Activated T-helper 1 cell treated with anti-CD3 and anti-CD28 coated beads, Interleukin-12 subunit alpha, Interleukin-12 subunit beta, Interleukin-2, Interleukin-4 antibody, amounts not matched to agents 30 ng/mL and 10 ng/mL and 1 ng/mL, durations not matched to agents 14 hours and 24 hours and 36 hours (primary cell): ENCODE measurements at regions of chr17 and their contacts with region 1.

Region 1: GRCh38 chr17:3723556-3724369 is at the start of gene HASPIN:
- DNase-seq: peak; percentile 93
- H3K4me3 Mint-ChIP-seq: peak within 1 kb of the TSS; percentile 98
- H3K27ac Mint-ChIP-seq: peak within 1 kb of the TSS; percentile 86
- H3K4me1 Mint-ChIP-seq: peaks cover 62% of the 10 kb centered on the region
- H3K27me3 Mint-ChIP-seq: no peaks in the 10 kb centered on the region
- total RNA-seq, gene HASPIN: 25.7 and 26.1 TPM in 2 replicates

Region 2: GRCh38 chr17:3668279-3669085 is 55.3 kb before region 1 on chr17 and contains the starts of genes EMC6 and TAX1BP3:
- intact Hi-C with region 1: loop called (anchors 1 kb)
- DNase-seq: peak; percentile 100
- H3K4me3 Mint-ChIP-seq: peak within 1 kb of the TSS; percentile 98
- H3K27ac Mint-ChIP-seq: peak within 1 kb of the TSS; percentile 97
- H3K4me1 Mint-ChIP-seq: peaks cover 21% of the 10 kb centered on the region
- H3K27me3 Mint-ChIP-seq: peaks cover 2% of the 10 kb centered on the region
- total RNA-seq, gene EMC6: 63.6 and 73.3 TPM in 2 replicates
- total RNA-seq, gene TAX1BP3: 29.3 and 30.1 TPM in 2 replicates

Region 3: GRCh38 chr17:3695723-3696411 is 27.9 kb before region 1 on chr17 and contains the start of gene P2RX5:
- intact Hi-C with region 1: loop called (anchors 1 kb)
- DNase-seq: peak; percentile 49
- H3K4me3 Mint-ChIP-seq: peak within 1 kb of the TSS; percentile 98
- H3K27ac Mint-ChIP-seq: peak within 1 kb of the TSS; percentile 93
- H3K4me1 Mint-ChIP-seq: peaks cover 40% of the 10 kb centered on the region
- H3K27me3 Mint-ChIP-seq: no peaks in the 10 kb centered on the region
- total RNA-seq, gene P2RX5: 133 and 143 TPM in 2 replicates

Region 4: DNA sequence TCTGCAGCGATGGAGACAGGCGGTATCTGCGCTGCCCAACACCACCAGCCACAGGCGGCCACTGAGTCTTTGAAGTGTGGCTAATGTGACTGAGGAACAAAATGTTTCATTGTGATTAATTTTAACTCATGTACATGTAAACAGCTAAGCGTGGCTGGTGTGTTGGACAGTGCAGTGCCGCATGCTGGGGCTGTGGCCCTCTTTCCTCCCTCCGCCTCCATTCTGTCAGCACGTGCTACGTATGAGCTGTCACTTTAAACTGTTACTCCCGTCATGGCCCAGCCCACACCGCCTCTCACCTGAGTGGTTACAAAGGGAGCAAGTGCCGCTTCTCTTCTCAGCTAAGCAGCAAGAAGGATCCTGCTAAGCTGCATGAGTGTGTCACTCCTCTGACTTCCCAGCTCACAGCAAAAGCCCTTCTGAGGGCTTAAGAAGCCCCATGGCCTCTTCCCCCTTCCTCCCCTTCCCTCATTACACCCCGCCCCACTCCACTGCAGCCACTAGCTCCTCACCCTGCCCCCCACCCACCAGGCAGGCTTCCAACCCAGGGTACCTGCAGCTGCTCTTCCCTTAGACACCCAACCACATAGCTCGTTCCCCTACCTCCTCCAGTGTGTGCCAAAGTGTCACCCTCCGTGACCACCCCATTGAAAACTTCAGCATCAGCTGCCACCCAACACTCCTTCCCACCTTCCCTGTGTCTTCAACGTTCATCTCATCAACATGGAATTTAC is 15.0 kb after region 1 on chr17:
- intact Hi-C with region 1: no loop called
- DNase-seq: peak; percentile 49
- H3K4me3 Mint-ChIP-seq: peak overlapping the region; percentile 21
- H3K27ac Mint-ChIP-seq: peak overlapping the region; percentile 67
- H3K4me1 Mint-ChIP-seq: peaks cover 50% of the 10 kb centered on the region
- H3K27me3 Mint-ChIP-seq: peaks cover 2% of the 10 kb centered on the region

Region 5: GRCh38 chr17:3845621-3846441 is 122.1 kb after region 1 on chr17 and contains the start of gene NCBP3:
- intact Hi-C with region 1: loop called (anchors 5 kb)
- DNase-seq: peak; percentile 90
- H3K4me3 Mint-ChIP-seq: peak within 1 kb of the TSS; percentile 97
- H3K27ac Mint-ChIP-seq: peak within 1 kb of the TSS; percentile 97
- H3K4me1 Mint-ChIP-seq: peaks cover 16% of the 10 kb centered on the region
- H3K27me3 Mint-ChIP-seq: peaks cover 9% of the 10 kb centered on the region
- total RNA-seq, gene NCBP3: 54.2 and 56.0 TPM in 2 replicates

Region 6: GRCh38 chr17:3870871-3871306 is 147.1 kb after region 1 on chr17:
- intact Hi-C with region 1: no loop called
- DNase-seq: no peak
- H3K4me3 Mint-ChIP-seq: peak overlapping the region; percentile 42
- H3K27ac Mint-ChIP-seq: peak overlapping the region; percentile 85
- H3K4me1 Mint-ChIP-seq: peaks cover 8% of the 10 kb centered on the region
- H3K27me3 Mint-ChIP-seq: no peaks in the 10 kb centered on the region

Region 7: DNA sequence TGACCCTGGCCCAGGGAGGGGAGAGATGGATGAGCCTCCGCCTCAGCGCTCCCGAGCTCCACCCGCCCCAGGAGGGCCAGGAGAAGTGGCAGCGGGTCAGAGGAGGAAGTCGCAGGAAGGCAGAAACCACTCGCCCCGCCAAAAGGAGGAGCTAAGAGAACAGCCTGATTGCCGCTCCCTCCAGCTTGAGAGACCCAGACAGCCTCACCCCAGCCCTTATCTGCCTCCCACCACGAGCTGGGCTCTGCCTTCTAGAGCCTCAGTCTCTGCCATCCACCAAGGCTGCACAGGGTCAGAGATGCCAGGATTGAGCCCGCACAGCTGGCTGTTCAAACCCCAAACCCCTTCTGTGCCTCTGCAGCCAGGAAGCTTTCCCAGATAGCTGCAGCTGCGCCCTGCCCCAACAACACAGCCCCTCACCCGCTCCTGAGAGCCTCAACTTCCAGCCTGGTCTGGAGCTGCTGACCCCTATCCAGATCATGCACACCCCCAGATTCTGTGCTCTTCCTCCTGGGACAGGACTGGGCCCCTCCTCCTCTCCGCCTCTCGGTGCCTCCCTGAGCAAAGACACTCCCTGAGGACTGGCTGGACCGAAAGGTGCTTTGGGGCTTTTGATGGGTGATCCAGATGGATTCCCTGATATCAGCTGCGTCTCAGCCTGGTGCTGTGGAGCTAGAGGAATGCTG is 241.5 kb after region 1 on chr17:
- intact Hi-C with region 1: loop called (anchors 5 kb)
- DNase-seq: peak; percentile 66
- H3K4me3 Mint-ChIP-seq: peak overlapping the region; percentile 88
- H3K27ac Mint-ChIP-seq: peak overlapping the region; percentile 90
- H3K4me1 Mint-ChIP-seq: peaks cover 38% of the 10 kb centered on the region
- H3K27me3 Mint-ChIP-seq: no peaks in the 10 kb centered on the region